ENCODE measurements at regions of chr12 and their contacts with region 1.

Region 1: DNA sequence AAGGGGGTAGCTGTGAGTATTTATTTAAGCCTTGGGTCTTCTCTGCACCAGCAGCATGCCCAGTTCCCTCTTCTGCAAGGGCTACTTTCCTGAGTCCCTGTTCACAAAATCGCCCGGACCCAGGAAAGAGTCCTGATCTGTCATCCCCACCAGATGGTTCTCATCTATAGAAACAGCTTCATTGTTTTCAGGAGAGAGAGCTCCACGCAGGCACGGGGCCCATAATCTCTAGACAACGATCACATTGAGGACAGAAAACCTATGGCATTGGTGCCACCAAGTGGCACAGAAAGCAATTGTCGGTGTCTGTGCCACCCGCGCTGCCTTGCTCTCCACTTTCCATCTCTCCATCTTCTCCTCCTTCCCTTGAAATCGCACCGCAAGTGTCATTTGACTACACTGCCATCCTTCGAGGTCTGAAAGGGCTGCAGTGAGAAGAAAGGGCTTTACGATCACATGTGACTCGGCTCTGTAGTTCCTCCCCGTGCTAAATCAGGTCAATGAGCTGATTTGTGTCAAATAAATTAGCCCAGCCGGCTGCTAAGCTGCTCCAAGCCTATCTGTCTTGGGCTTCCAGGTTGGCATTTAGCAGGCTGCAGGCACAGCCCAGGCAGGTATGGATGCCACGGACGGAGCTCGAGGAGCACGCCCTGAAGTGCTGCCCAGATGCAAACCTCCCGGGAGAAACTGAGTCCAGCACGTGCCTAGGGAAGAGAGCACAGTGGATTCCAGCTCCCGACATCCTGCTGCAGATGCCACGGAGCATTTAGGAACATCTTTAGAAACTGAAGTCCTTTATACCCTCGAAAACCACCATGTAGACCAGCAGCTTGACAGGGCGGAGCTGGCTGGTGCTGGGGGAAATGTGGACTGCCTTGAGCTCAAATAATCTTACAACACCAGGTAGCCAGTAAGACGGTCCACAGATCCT is 28.8 kb downstream of the SPRING1 start:
- DNase-seq: peak; percentile 17 to 71 (median 52)
- ATAC-seq: peak; percentile 90
- H3K4me3 ChIP-seq: no peak overlapping the region
- H3K4me3 Mint-ChIP-seq: peak overlapping the region; percentile 68
- H3K27ac ChIP-seq: no peak overlapping the region
- H3K27ac Mint-ChIP-seq: no peak overlapping the region
- H3K4me1 ChIP-seq: peaks cover 5% of the 10 kb centered on the region
- H3K4me1 Mint-ChIP-seq: peaks cover 9% of the 10 kb centered on the region
- H3K27me3 ChIP-seq: peaks cover 0 to 2% of the 10 kb centered on the region in 2 experiments
- H3K27me3 Mint-ChIP-seq: peaks cover 4% of the 10 kb centered on the region
- CTCF ChIP-seq: peak; percentile 61

Region 2: GRCh38 chr12:115998119-115998633 is 710.9 kb before region 1 on chr12:
- CTCF ChIA-PET with region 1: interaction called, 35 read pairs
- POLR2A ChIA-PET with region 1: interaction called, 4 read pairs
- intact Hi-C with region 1: loop called (anchors 1 kb)
- DNase-seq: peak in 3 of 9 experiments; percentile 20 to 63 (median 55)
- ATAC-seq: peak; percentile 58
- H3K4me3 ChIP-seq: no peak overlapping the region
- H3K4me3 Mint-ChIP-seq: no peak overlapping the region
- H3K27ac ChIP-seq: no peak overlapping the region
- H3K27ac Mint-ChIP-seq: peak overlapping the region; percentile 75
- H3K4me1 ChIP-seq: no peaks in the 10 kb centered on the region
- H3K4me1 Mint-ChIP-seq: peaks cover 14% of the 10 kb centered on the region
- H3K27me3 ChIP-seq: no peaks in the 10 kb centered on the region
- H3K27me3 Mint-ChIP-seq: no peaks in the 10 kb centered on the region
- CTCF ChIP-seq: peak; percentile 97

Region 3: GRCh38 chr12:116066381-116067230 is 642.5 kb before region 1 on chr12:
- CTCF ChIA-PET with region 1: interaction called, 3 read pairs
- POLR2A ChIA-PET with region 1: no interaction called
- intact Hi-C with region 1: loop called in 1 of 2 experiments (anchors 2 kb)
- DNase-seq: peak; percentile 8 to 78 (median 59)
- ATAC-seq: peak; percentile 88
- H3K4me3 ChIP-seq: no peak overlapping the region
- H3K4me3 Mint-ChIP-seq: no peak overlapping the region
- H3K27ac ChIP-seq: no peak overlapping the region
- H3K27ac Mint-ChIP-seq: no peak overlapping the region
- H3K4me1 ChIP-seq: no peaks in the 10 kb centered on the region
- H3K4me1 Mint-ChIP-seq: peaks cover 26% of the 10 kb centered on the region
- H3K27me3 ChIP-seq: no peaks in the 10 kb centered on the region
- H3K27me3 Mint-ChIP-seq: no peaks in the 10 kb centered on the region
- CTCF ChIP-seq: peak; percentile 83

Region 4: GRCh38 chr12:116955382-116956021 is 246.4 kb after region 1 on chr12:
- CTCF ChIA-PET with region 1: interaction called, 18 read pairs
- POLR2A ChIA-PET with region 1: no interaction called
- intact Hi-C with region 1: no loop called
- DNase-seq: peak in 3 of 9 experiments; percentile 9 to 66 (median 52)
- ATAC-seq: no peak
- H3K4me3 ChIP-seq: no peak overlapping the region
- H3K4me3 Mint-ChIP-seq: no peak overlapping the region
- H3K27ac ChIP-seq: no peak overlapping the region
- H3K27ac Mint-ChIP-seq: no peak overlapping the region
- H3K4me1 ChIP-seq: no peaks in the 10 kb centered on the region
- H3K4me1 Mint-ChIP-seq: no peaks in the 10 kb centered on the region
- H3K27me3 ChIP-seq: no peaks in the 10 kb centered on the region
- H3K27me3 Mint-ChIP-seq: no peaks in the 10 kb centered on the region
- CTCF ChIP-seq: no peak

Measured in CD8-positive, alpha-beta T cell (primary cell).